Activated naive CD4-positive, alpha-beta T cell treated with anti-CD3 and anti-CD28 coated beads for 36 hours (primary cell): ENCODE measurements at regions of chr7 and their contacts with region 1.

Region 1: DNA sequence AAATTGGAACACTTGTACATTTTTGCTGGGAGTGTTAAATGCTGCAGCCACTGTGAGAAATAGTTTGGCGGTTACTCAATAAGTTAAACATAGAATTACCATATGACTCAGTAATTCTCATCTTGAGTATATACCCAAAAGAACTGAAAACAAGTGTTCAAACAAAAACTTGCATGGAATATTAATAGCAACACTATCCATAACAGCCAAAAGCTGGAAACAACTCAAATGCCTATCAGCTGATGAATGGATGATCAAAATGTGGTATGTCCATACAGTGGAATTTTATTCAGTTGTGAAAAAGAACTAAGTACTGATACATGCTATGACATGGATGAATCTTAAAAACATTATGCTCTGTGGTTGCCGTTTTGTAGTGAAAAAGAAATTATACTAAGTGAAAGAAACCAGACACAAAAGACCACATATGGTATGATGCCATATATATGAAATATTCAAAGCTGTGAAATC is 63.0 kb upstream of the SP4 start:
- DNase-seq: no peak
- H3K4me3 Mint-ChIP-seq: no peak overlapping the region
- H3K27ac Mint-ChIP-seq: no peak overlapping the region
- H3K4me1 Mint-ChIP-seq: peaks cover 27% of the 10 kb centered on the region
- H3K27me3 Mint-ChIP-seq: no peaks in the 10 kb centered on the region

Region 2: GRCh38 chr7:21338728-21339164 is 26.1 kb before region 1 on chr7:
- CTCF ChIA-PET with region 1: no interaction called
- intact Hi-C with region 1: loop called (anchors 1 kb)
- DNase-seq: peak; percentile 80
- H3K4me3 Mint-ChIP-seq: peak overlapping the region; percentile 1
- H3K27ac Mint-ChIP-seq: peak overlapping the region; percentile 94
- H3K4me1 Mint-ChIP-seq: peaks cover 20% of the 10 kb centered on the region
- H3K27me3 Mint-ChIP-seq: no peaks in the 10 kb centered on the region

Region 3: GRCh38 chr7:21383227-21384220 is 18.7 kb after region 1 on chr7:
- CTCF ChIA-PET with region 1: no interaction called
- intact Hi-C with region 1: no loop called
- DNase-seq: no peak
- H3K4me3 Mint-ChIP-seq: no peak overlapping the region
- H3K27ac Mint-ChIP-seq: no peak overlapping the region
- H3K4me1 Mint-ChIP-seq: no peaks in the 10 kb centered on the region
- H3K27me3 Mint-ChIP-seq: no peaks in the 10 kb centered on the region

Region 4: GRCh38 chr7:21543528-21544302 is 178.9 kb after region 1 on chr7:
- CTCF ChIA-PET with region 1: no interaction called
- intact Hi-C with region 1: no loop called
- DNase-seq: peak; percentile 23
- H3K4me3 Mint-ChIP-seq: peak overlapping the region; percentile 68
- H3K27ac Mint-ChIP-seq: no peak overlapping the region
- H3K4me1 Mint-ChIP-seq: peaks cover 4% of the 10 kb centered on the region
- H3K27me3 Mint-ChIP-seq: peaks cover 44% of the 10 kb centered on the region